ENCODE measurements at regions of chr9 and their contacts with region 1.

Region 1: DNA sequence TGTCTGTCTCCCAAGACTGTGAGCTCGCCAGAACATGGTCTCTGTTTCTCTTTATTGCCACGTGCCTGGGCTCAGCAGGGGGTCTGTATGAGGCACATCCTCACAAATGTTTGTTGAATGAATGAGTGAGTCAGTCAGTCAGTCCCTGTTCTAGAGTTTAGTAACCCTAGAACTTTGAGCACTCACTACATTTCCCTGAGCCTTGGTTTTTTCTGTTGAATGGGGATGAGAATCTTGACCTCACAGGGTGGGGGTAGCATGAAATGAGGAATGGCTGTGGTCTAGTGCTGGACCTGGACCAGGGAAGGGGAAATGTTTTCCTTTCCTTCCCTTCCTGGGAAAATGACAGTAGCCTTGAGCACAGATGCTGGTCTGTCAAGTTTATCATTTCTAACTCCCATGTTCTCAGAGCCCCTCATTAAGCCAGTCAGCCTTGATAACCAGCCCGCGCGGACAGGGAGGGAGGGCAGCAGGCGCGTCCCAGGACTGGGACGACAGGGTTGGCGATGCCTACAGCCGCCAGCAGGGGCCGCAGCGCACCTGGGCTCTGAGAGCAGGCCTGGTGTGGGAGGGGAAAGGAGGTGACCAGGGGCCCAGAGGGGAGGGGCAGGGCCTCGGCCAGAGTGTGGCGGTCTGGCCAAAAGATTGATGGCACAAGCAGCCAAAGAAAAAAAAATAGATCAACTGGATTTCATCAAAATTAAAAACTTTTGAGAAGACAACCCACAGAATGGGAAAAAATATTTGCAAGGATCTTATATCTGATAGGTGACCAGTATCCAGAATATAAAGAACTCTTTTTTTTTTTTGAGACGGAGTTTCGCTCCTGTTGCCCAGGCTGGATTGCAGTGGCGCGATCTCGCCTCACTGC is 24.1 kb upstream of the WNK2 start:
- DNase-seq: peak; percentile 93
- ATAC-seq: peak; percentile 99
- H3K4me3 ChIP-seq: no peak overlapping the region
- H3K27ac ChIP-seq: no peak overlapping the region
- H3K4me1 ChIP-seq: peaks cover 3% of the 10 kb centered on the region
- H3K27me3 ChIP-seq: no peaks in the 10 kb centered on the region
- CTCF ChIP-seq: peak; percentile 98

Region 2: DNA sequence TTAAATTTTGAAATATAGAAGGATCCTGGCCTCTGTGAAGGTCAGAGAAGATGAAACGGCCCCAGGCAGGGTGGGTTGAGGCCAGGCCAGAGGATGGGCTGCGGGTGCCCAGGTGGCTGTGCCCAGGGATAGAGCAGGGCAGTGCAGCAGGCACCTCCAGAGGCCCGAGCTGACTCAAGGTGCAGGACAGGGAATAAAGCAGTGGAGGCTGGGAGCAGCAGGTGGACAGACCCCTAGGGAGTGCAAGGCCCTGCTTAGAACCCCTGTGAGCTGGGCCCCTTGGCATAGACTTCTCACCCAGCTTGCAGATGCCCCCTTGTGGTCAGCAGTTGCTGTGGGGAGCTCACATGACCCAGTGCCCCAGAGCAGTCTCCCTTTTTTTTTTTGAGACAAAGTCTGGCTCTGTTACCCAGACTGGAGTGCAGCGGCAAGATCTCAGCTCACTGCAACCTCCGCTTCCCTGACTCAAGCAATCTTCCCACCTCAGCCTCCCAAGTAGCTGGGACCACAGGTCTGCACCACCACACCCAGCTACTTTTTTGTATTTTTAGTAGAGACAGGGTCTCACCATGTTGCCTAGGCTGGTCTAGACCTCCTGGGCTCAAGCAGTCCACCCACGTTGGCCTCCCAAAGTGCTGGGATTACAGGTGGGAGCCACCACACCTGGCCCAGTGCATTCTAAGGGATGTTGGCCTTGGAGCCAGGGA is 142.9 kb after region 1 on chr9:
- intact Hi-C with region 1: loop called (anchors 10 kb)
- DNase-seq: peak; percentile 73
- ATAC-seq: peak; percentile 72
- H3K4me3 ChIP-seq: no peak overlapping the region
- H3K27ac ChIP-seq: no peak overlapping the region
- H3K4me1 ChIP-seq: no peaks in the 10 kb centered on the region
- H3K27me3 ChIP-seq: no peaks in the 10 kb centered on the region
- CTCF ChIP-seq: peak; percentile 58

Region 3: GRCh38 chr9:93329632-93330315 is 169.9 kb after region 1 on chr9:
- intact Hi-C with region 1: no loop called
- DNase-seq: no peak
- ATAC-seq: no peak
- H3K4me3 ChIP-seq: no peak overlapping the region
- H3K27ac ChIP-seq: no peak overlapping the region
- H3K4me1 ChIP-seq: no peaks in the 10 kb centered on the region
- H3K27me3 ChIP-seq: no peaks in the 10 kb centered on the region
- CTCF ChIP-seq: no peak